CD8-positive, alpha-beta T cell (primary cell): ENCODE measurements at regions of chr1 and their contacts with region 1.

Region 1: GRCh38 chr1:45303582-45304310 is 22.9 kb upstream of the HPDL start:
- DNase-seq: peak; percentile 95 to 98 (median 98)
- ATAC-seq: peak; percentile 88
- H3K4me3 ChIP-seq: peak overlapping the region; percentile 85 to 93
- H3K4me3 Mint-ChIP-seq: peak overlapping the region; percentile 91
- H3K27ac ChIP-seq: peak overlapping the region; percentile 89 to 95
- H3K27ac Mint-ChIP-seq: peak overlapping the region; percentile 98
- H3K4me1 ChIP-seq: peaks cover 9% of the 10 kb centered on the region
- H3K4me1 Mint-ChIP-seq: peaks cover 23% of the 10 kb centered on the region
- H3K27me3 ChIP-seq: no peaks in the 10 kb centered on the region
- H3K27me3 Mint-ChIP-seq: no peaks in the 10 kb centered on the region
- CTCF ChIP-seq: peak; percentile 66

Region 2: GRCh38 chr1:44674113-44675000 is 629.4 kb before region 1 on chr1 and contains the starts of genes ARMH1 and TMEM53:
- CTCF ChIA-PET with region 1: no interaction called
- POLR2A ChIA-PET with region 1: no interaction called
- intact Hi-C with region 1: loop called in 1 of 2 experiments (anchors 1 kb)
- DNase-seq: peak; percentile 91 to 98 (median 96)
- ATAC-seq: peak; percentile 91
- H3K4me3 ChIP-seq: peak within 1 kb of the TSS; percentile 76 to 88
- H3K4me3 Mint-ChIP-seq: peak within 1 kb of the TSS; percentile 94
- H3K27ac ChIP-seq: peak within 1 kb of the TSS; percentile 81 to 82
- H3K27ac Mint-ChIP-seq: peak within 1 kb of the TSS; percentile 91
- H3K4me1 ChIP-seq: peaks cover 12% of the 10 kb centered on the region
- H3K4me1 Mint-ChIP-seq: peaks cover 25% of the 10 kb centered on the region
- H3K27me3 ChIP-seq: no peaks in the 10 kb centered on the region
- H3K27me3 Mint-ChIP-seq: no peaks in the 10 kb centered on the region
- CTCF ChIP-seq: no peak
- total RNA-seq, gene ARMH1: 117 to 128 TPM
- total RNA-seq, gene TMEM53: 1.2 TPM in 1 of 2 experiments, not detected in the other

Region 3: GRCh38 chr1:44739361-44740178 is 564.2 kb before region 1 on chr1 and contains the start of gene KIF2C:
- CTCF ChIA-PET with region 1: interaction called, 4 read pairs
- POLR2A ChIA-PET with region 1: no interaction called
- intact Hi-C with region 1: loop called in 1 of 2 experiments (anchors 2 kb)
- DNase-seq: peak; percentile 93 to 98 (median 96)
- ATAC-seq: peak; percentile 100
- H3K4me3 ChIP-seq: peak within 1 kb of the TSS; percentile 81 to 84
- H3K4me3 Mint-ChIP-seq: peak within 1 kb of the TSS; percentile 93
- H3K27ac ChIP-seq: peak within 1 kb of the TSS; percentile 69 to 88
- H3K27ac Mint-ChIP-seq: peak within 1 kb of the TSS; percentile 97
- H3K4me1 ChIP-seq: peaks cover 12% of the 10 kb centered on the region
- H3K4me1 Mint-ChIP-seq: peaks cover 17% of the 10 kb centered on the region
- H3K27me3 ChIP-seq: no peaks in the 10 kb centered on the region
- H3K27me3 Mint-ChIP-seq: no peaks in the 10 kb centered on the region
- CTCF ChIP-seq: no peak
- total RNA-seq, gene KIF2C: 0.58 to 0.81 TPM

Region 4: DNA sequence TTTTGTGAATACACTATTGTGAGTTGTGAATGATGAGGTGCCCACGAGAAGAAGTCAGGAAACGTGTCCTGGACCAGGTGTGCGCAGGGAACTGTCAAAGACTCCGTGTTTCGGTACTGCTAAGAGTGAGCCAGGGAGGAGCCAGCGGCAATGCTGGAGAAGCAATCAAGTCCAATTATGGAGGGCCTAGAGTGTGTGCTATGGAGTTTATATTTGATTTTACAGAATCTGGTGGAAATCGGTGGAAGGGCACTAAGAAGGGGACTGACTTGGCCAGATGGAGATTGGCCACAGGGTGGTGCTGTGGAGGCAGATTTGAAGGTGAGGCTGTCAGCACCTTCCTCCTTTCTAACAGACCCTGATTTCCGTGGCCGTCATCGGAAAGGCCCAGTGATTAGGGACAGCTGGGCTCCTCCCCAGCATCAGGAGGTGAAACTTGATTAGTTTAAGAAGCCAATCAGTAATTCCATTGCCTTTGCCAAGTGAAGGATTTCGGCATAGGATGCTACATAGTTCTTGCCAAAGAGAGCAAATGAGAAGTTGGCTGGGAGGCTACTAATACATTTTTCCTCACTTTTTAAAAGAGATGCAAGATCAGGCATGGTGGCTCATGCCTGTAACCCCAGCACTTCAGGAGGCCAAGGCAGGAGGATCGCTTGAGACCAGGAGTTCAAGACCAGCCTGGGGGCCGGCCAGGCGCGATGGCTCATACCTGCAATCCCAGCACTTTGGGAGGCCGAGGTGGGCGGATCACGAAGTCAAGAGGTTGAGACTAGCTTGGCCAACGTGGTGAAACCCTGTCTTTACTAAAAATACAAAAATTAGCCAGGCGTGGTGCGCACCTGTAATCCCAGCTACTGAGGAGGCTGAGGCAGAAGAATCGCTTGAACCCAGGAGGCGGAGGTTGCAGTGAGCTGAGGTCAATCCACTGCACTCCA is 467.7 kb before region 1 on chr1:
- CTCF ChIA-PET with region 1: interaction called, 3 read pairs
- POLR2A ChIA-PET with region 1: no interaction called
- intact Hi-C with region 1: loop called (anchors 1 to 5 kb)
- DNase-seq: peak; percentile 68 to 91 (median 85)
- ATAC-seq: peak; percentile 98
- H3K4me3 ChIP-seq: no peak overlapping the region
- H3K4me3 Mint-ChIP-seq: peak overlapping the region; percentile 16
- H3K27ac ChIP-seq: no peak overlapping the region
- H3K27ac Mint-ChIP-seq: no peak overlapping the region
- H3K4me1 ChIP-seq: no peaks in the 10 kb centered on the region
- H3K4me1 Mint-ChIP-seq: peaks cover 9% of the 10 kb centered on the region
- H3K27me3 ChIP-seq: no peaks in the 10 kb centered on the region
- H3K27me3 Mint-ChIP-seq: peaks cover 4% of the 10 kb centered on the region
- CTCF ChIP-seq: peak; percentile 73

Region 5: DNA sequence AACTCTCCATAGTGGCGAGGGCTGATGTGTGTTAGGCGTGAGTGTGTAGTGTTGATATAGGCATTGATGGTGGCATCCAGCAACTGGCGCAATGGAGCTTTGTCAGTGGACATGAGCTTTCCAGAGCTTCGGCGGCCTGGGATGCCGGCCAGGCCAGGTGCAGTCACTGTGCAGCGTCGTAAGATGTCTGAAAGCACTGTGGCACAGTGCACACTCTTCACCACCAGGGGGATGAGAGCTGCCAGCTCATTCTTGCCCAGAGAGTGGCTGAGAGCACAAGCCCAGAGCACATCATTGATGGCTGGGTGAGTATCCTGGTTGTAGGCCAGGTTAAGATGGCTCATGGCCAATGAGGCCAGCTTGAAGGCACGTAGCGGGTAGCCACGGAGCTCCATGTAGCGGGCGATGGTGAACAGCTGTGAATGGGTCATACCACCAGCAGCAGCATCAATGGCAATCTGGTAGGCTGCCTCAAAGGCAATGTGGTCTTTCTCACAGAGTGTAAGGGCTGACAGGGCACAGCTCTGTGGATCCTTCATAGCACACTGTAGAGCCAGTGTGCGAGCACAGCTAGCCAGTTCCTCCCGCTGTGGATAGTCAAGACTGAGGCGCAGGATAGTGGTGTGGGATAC is 285.0 kb before region 1 on chr1:
- CTCF ChIA-PET with region 1: interaction called, 315 read pairs
- POLR2A ChIA-PET with region 1: interaction called, 94 read pairs
- intact Hi-C with region 1: loop called (anchors 1 kb)
- DNase-seq: peak; percentile 26 to 72 (median 58)
- ATAC-seq: peak; percentile 85
- H3K4me3 ChIP-seq: no peak overlapping the region
- H3K4me3 Mint-ChIP-seq: no peak overlapping the region
- H3K27ac ChIP-seq: no peak overlapping the region
- H3K27ac Mint-ChIP-seq: no peak overlapping the region
- H3K4me1 ChIP-seq: peaks cover 3% of the 10 kb centered on the region
- H3K4me1 Mint-ChIP-seq: peaks cover 12% of the 10 kb centered on the region
- H3K27me3 ChIP-seq: no peaks in the 10 kb centered on the region
- H3K27me3 Mint-ChIP-seq: no peaks in the 10 kb centered on the region
- CTCF ChIP-seq: peak; percentile 59

Region 6: DNA sequence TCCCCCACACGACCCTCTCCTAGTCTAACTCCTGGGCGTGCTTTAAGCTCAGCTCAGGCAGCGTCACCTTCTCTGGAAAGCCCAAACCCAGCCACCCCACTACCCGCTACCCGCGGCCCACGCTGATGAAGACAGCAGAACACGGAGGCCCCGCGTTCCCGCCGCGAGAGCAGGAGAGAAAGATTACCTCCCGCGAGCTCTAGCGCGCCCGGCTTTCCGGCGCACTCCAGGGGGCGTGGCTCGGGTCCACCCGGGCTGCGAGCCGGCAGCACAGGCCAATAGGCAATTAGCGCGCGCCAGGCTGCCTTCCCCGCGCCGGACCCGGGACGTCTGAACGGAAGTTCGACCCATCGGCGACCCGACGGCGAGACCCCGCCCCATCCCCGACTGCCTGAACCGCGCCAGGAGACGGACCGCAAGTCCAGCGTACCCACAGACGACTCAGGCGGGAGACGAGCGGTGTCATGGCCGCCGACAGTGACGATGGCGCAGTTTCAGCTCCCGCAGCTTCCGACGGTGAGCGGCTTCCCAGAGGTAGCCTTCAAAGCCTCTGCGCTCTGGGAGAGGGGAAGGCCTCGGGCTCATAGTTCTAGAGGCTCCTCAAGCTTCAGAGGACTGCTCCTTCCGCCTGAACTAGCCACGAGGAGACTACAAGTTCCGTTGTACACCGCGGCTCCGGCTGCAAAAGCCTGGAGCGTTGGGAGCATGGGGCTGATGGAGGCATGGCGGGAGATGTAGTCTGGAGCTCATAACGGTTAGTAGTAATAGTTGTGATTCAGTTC is 36.2 kb after region 1 on chr1 and contains the starts of genes MUTYH and TOE1:
- CTCF ChIA-PET with region 1: interaction called, 16 read pairs
- POLR2A ChIA-PET with region 1: interaction called, 75 read pairs
- intact Hi-C with region 1: loop called (anchors 1 kb)
- DNase-seq: peak; percentile 79 to 94 (median 89)
- ATAC-seq: peak; percentile 81
- H3K4me3 ChIP-seq: peak within 1 kb of the TSS; percentile 88 to 94
- H3K4me3 Mint-ChIP-seq: peak within 1 kb of the TSS; percentile 98
- H3K27ac ChIP-seq: peak within 1 kb of the TSS; percentile 97 to 99
- H3K27ac Mint-ChIP-seq: peak within 1 kb of the TSS; percentile 97
- H3K4me1 ChIP-seq: peaks cover 35% of the 10 kb centered on the region
- H3K4me1 Mint-ChIP-seq: peaks cover 50% of the 10 kb centered on the region
- H3K27me3 ChIP-seq: no peaks in the 10 kb centered on the region
- H3K27me3 Mint-ChIP-seq: no peaks in the 10 kb centered on the region
- CTCF ChIP-seq: no peak
- total RNA-seq, gene MUTYH: 53.0 to 62.5 TPM
- total RNA-seq, gene TOE1: 53.8 to 56.5 TPM

Region 7: GRCh38 chr1:45583264-45583665 is 279.5 kb after region 1 on chr1:
- CTCF ChIA-PET with region 1: interaction called, 3 read pairs
- POLR2A ChIA-PET with region 1: interaction called, 6 read pairs
- intact Hi-C with region 1: loop called (anchors 1 kb)
- DNase-seq: peak; percentile 85 to 98 (median 93)
- ATAC-seq: peak; percentile 72
- H3K4me3 ChIP-seq: peak overlapping the region; percentile 82 to 98
- H3K4me3 Mint-ChIP-seq: peak overlapping the region; percentile 92
- H3K27ac ChIP-seq: peak overlapping the region; percentile 86 to 89
- H3K27ac Mint-ChIP-seq: peak overlapping the region; percentile 98
- H3K4me1 ChIP-seq: peaks cover 23% of the 10 kb centered on the region
- H3K4me1 Mint-ChIP-seq: peaks cover 27% of the 10 kb centered on the region
- H3K27me3 ChIP-seq: no peaks in the 10 kb centered on the region
- H3K27me3 Mint-ChIP-seq: no peaks in the 10 kb centered on the region
- CTCF ChIP-seq: no peak